ENCODE measurements at regions of chr7 and their contacts with region 1.

Region 1: GRCh38 chr7:36509962-36510361 is 120.3 kb downstream of the ANLN start:
- DNase-seq: no peak
- ATAC-seq: peak; percentile 87
- H3K4me3 Mint-ChIP-seq: no peak overlapping the region
- H3K27ac Mint-ChIP-seq: no peak overlapping the region
- H3K4me1 Mint-ChIP-seq: peaks cover 7% of the 10 kb centered on the region
- H3K27me3 Mint-ChIP-seq: peaks cover 3% of the 10 kb centered on the region; the same call in 1 of the 2 replicates
- CTCF ChIP-seq: no peak

Region 2: GRCh38 chr7:36521911-36522310 is 11.9 kb after region 1 on chr7:
- CTCF ChIA-PET with region 1: interaction called, 10 read pairs
- POLR2A ChIA-PET with region 1: no interaction called
- DNase-seq: no peak
- ATAC-seq: no peak
- H3K4me3 Mint-ChIP-seq: no peak overlapping the region
- H3K27ac Mint-ChIP-seq: no peak overlapping the region
- H3K4me1 Mint-ChIP-seq: peaks cover 8% of the 10 kb centered on the region
- H3K27me3 Mint-ChIP-seq: no peaks in the 10 kb centered on the region; the same call in 1 of the 2 replicates
- CTCF ChIP-seq: no peak

Measured in WTC11 (cell line).